ENCODE measurements at regions of chr10 and their contacts with region 1.

Region 1: GRCh38 chr10:1048732-1049424 is at the start of gene IDI1:
- DNase-seq: peak; percentile 97 to 99
- ATAC-seq: peak; percentile 88 to 91 (median 90)
- H3K4me3 ChIP-seq: peak within 1 kb of the TSS; percentile 89
- H3K27ac ChIP-seq: peak within 1 kb of the TSS; percentile 98
- H3K4me1 ChIP-seq: peaks cover 47% of the 10 kb centered on the region
- H3K27me3 ChIP-seq: no peaks in the 10 kb centered on the region
- CTCF ChIP-seq: no peak
- total RNA-seq, gene IDI1: 49.3 to 61.3 (median 55.3) TPM

Region 2: GRCh38 chr10:870564-871166 is 178.2 kb before region 1 on chr10:
- intact Hi-C with region 1: loop called in 1 of 2 experiments (anchors 5 kb)
- DNase-seq: no peak
- ATAC-seq: no peak
- H3K4me3 ChIP-seq: peak overlapping the region; percentile 51
- H3K27ac ChIP-seq: peak overlapping the region; percentile 87
- H3K4me1 ChIP-seq: peaks cover 60% of the 10 kb centered on the region
- H3K27me3 ChIP-seq: no peaks in the 10 kb centered on the region
- CTCF ChIP-seq: no peak

Region 3: DNA sequence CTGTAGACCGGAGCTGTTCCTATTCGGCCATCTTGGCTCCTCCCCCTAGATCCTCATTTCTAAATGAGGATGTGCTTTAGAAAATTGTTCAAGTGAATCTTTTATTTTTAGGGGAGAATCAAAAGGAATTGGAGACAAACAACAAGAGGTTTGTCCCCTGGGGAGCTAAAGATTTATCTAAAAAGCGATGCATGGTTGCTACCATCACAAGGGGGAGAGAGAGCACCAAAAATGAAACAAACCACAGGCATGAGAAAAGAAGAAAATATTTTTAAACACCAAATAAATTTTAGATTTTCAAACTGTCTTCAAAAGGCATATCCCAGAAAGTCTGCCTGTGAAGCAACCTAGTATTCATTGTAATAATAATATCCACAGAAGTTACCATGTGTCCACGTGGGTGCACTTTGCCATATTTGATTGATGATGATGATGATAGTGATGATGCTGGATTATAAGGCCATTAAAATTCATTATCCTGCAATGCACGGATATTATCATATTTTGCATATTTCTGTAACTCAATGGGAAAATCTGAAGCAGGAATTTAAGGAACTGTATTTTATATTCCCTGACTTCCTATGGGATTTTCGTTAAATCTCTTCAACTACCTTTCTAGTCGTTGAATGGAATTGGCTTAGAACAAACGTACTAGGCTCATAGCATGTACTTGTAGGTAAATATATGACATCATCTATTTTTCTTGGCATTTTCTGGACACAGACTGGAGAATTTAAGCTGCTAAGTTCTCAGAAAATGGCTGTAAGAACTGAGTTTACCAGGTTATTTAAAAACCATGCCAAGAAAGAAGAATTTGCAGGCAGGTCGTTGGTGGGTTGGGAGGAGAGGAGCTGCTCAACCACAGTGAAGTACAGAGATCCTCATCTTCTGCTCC is 178.9 kb after region 1 on chr10:
- intact Hi-C with region 1: no loop called
- DNase-seq: no peak
- ATAC-seq: no peak
- H3K4me3 ChIP-seq: no peak overlapping the region
- H3K27ac ChIP-seq: no peak overlapping the region
- H3K4me1 ChIP-seq: no peaks in the 10 kb centered on the region
- H3K27me3 ChIP-seq: peaks cover 0 to 4% (median 0%) of the 10 kb centered on the region in 3 donors
- CTCF ChIP-seq: no peak

Region 4: GRCh38 chr10:1328981-1329614 is 280.2 kb after region 1 on chr10:
- intact Hi-C with region 1: no loop called
- DNase-seq: no peak
- ATAC-seq: no peak
- H3K4me3 ChIP-seq: no peak overlapping the region
- H3K27ac ChIP-seq: no peak overlapping the region
- H3K4me1 ChIP-seq: no peaks in the 10 kb centered on the region
- H3K27me3 ChIP-seq: peaks cover 0 to 5% (median 0%) of the 10 kb centered on the region in 3 donors
- CTCF ChIP-seq: no peak

Region 5: DNA sequence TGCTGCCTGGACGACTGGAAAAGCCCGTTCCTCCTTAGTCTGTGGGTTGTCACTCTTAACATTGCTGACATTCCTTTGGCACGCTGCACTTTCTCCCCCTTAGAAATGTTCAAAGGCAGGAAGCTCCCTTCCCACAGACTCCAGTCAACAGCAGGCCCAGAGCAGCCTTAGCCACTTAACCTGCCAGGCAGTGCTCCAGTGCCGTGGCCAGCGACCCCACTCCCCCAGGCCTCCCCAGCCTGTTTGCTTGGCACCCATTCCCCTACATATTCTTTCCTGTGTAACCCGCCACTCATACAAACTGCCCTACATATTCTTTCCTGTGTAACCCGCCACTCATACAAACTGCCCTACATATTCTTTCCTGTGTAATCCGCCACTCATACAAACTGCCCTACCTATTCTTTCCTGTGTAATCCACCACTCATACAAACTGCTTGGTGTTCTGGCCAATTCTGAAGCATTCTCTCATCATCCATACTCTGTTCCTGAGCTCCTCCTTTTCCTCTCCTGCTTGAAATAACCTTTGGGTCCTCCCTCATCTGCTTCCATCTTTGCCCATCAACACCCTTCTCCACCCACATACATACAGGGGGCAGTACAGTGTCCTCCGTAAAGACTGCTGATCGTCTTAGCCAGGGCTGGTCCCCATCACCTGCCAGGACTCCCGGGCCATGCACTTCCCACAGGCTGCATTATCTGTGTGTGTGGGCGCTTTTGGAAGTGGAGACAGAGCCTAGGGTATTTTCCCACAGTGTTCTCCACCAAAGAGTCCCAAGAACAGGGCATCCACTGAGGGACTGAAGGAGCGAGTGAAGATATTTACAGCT is 631.2 kb after region 1 on chr10:
- intact Hi-C with region 1: no loop called
- DNase-seq: no peak
- ATAC-seq: no peak
- H3K4me3 ChIP-seq: no peak overlapping the region
- H3K27ac ChIP-seq: no peak overlapping the region
- H3K4me1 ChIP-seq: no peaks in the 10 kb centered on the region
- H3K27me3 ChIP-seq: peaks cover 0 to 3% (median 0%) of the 10 kb centered on the region in 3 donors
- CTCF ChIP-seq: no peak

Measured in psoas muscle (tissue), 8 donors.